Activated T-helper 1 cell treated with anti-CD3 and anti-CD28 coated beads, Interleukin-12 subunit alpha, Interleukin-12 subunit beta, Interleukin-2, Interleukin-4 antibody, amounts not matched to agents 30 ng/mL and 10 ng/mL and 1 ng/mL, durations not matched to agents 14 hours and 24 hours and 36 hours (primary cell): ENCODE measurements at regions of chr5 and their contacts with region 1.

Region 1: GRCh38 chr5:173245319-173246134 is 10.5 kb upstream of the NKX2-5 start:
- DNase-seq: no peak
- H3K4me3 Mint-ChIP-seq: no peak overlapping the region
- H3K27ac Mint-ChIP-seq: no peak overlapping the region
- H3K4me1 Mint-ChIP-seq: no peaks in the 10 kb centered on the region
- H3K27me3 Mint-ChIP-seq: peaks cover 81% of the 10 kb centered on the region

Region 2: GRCh38 chr5:173228639-173229381 is 16.7 kb before region 1 on chr5:
- intact Hi-C with region 1: loop called (anchors 2 kb)
- DNase-seq: no peak
- H3K4me3 Mint-ChIP-seq: no peak overlapping the region
- H3K27ac Mint-ChIP-seq: no peak overlapping the region
- H3K4me1 Mint-ChIP-seq: peaks cover 4% of the 10 kb centered on the region
- H3K27me3 Mint-ChIP-seq: peaks cover 62% of the 10 kb centered on the region

Region 3: DNA sequence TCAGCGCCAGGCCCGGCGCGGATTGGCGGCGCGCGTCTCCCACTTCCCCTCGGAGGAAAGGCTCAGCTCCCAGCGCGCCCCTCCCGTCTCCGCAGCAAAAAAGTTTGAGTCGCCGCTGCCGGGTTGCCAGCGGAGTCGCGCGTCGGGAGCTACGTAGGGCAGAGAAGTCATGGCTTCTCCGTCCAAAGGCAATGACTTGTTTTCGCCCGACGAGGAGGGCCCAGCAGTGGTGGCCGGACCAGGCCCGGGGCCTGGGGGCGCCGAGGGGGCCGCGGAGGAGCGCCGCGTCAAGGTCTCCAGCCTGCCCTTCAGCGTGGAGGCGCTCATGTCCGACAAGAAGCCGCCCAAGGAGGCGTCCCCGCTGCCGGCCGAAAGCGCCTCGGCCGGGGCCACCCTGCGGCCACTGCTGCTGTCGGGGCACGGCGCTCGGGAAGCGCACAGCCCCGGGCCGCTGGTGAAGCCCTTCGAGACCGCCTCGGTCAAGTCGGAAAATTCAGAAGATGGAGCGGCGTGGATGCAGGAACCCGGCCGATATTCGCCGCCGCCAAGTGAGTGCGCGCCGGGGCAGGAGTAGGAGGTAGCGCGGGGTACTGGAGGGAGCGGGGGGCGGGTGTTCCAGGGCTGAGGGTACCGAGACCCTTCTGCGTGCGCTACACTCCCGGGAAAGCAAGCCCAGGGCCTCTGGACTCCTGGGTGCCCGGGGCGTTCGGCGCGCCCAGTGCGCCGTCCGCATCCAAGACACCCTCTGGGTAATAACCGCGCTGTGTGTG is 1479.1 kb after region 1 on chr5 and contains the start of gene MSX2:
- intact Hi-C with region 1: loop called (anchors 5 kb)
- DNase-seq: no peak
- H3K4me3 Mint-ChIP-seq: peak within 1 kb of the TSS; percentile 15
- H3K27ac Mint-ChIP-seq: peak within 1 kb of the TSS; percentile 31
- H3K4me1 Mint-ChIP-seq: peaks cover 5% of the 10 kb centered on the region
- H3K27me3 Mint-ChIP-seq: peaks cover 82% of the 10 kb centered on the region
- total RNA-seq, gene MSX2: not detected in 2 replicates